ENCODE measurements at regions of chr22 and their contacts with region 1.

Region 1: GRCh38 chr22:45163451-45164269 is at the start of gene NUP50:
- DNase-seq: peak; percentile 96
- H3K4me3 Mint-ChIP-seq: peak within 1 kb of the TSS; percentile 98
- H3K27ac Mint-ChIP-seq: peak within 1 kb of the TSS; percentile 90
- H3K4me1 Mint-ChIP-seq: peaks cover 48% of the 10 kb centered on the region
- H3K27me3 Mint-ChIP-seq: no peaks in the 10 kb centered on the region
- total RNA-seq, gene NUP50: 156 and 164 TPM in 2 replicates

Region 2: DNA sequence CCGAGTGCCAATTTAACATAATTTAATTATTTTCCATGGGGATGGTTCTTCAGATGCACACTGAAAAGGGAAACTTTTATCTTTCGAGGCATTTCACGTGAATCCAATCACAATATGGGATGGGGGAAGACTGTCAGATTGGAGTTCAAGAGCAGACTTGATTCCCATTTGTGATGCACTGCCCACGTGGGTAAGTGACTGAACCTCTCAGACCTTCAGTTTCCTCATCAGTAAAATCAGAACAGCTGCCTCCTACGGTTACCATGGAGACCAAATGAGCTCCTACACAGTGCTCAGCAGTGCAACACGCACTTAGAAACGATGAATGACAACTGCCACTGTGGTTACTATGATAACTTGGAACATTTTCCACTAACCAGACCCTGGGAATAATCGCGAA is 55.3 kb after region 1 on chr22:
- intact Hi-C with region 1: loop called (anchors 2 kb)
- DNase-seq: no peak
- H3K4me3 Mint-ChIP-seq: no peak overlapping the region
- H3K27ac Mint-ChIP-seq: peak overlapping the region; percentile 79
- H3K4me1 Mint-ChIP-seq: peaks cover 13% of the 10 kb centered on the region
- H3K27me3 Mint-ChIP-seq: no peaks in the 10 kb centered on the region

Region 3: GRCh38 chr22:45240810-45241631 is 77.4 kb after region 1 on chr22 and contains the start of gene KIAA0930:
- intact Hi-C with region 1: loop called (anchors 2 kb)
- DNase-seq: peak; percentile 68
- H3K4me3 Mint-ChIP-seq: peak within 1 kb of the TSS; percentile 93
- H3K27ac Mint-ChIP-seq: peak within 1 kb of the TSS; percentile 89
- H3K4me1 Mint-ChIP-seq: peaks cover 8% of the 10 kb centered on the region
- H3K27me3 Mint-ChIP-seq: no peaks in the 10 kb centered on the region
- total RNA-seq, gene KIAA0930: 45.5 and 48.7 TPM in 2 replicates

Region 4: DNA sequence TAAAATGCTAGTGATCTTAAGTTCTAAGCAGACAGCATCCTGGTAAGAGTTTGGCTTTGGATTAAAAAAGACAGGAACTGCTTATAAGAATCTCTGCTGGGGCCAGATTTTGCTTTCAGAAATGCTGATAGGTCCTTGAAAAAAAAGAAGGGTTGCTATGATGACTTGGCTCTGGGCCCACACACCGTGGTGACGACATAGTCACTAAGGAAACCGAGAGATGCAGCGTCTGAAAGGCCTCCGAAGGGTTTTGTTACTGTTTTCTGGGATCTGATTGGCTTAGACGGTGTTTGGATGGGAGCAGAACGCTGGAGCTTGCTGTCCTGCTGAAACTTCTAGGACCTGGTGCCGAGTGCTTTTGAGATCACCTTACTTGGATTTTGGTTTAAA is 154.5 kb after region 1 on chr22:
- intact Hi-C with region 1: loop called (anchors 2 kb)
- DNase-seq: peak; percentile 83
- H3K4me3 Mint-ChIP-seq: peak overlapping the region; percentile 79
- H3K27ac Mint-ChIP-seq: peak overlapping the region; percentile 97
- H3K4me1 Mint-ChIP-seq: peaks cover 69% of the 10 kb centered on the region
- H3K27me3 Mint-ChIP-seq: no peaks in the 10 kb centered on the region

Region 5: DNA sequence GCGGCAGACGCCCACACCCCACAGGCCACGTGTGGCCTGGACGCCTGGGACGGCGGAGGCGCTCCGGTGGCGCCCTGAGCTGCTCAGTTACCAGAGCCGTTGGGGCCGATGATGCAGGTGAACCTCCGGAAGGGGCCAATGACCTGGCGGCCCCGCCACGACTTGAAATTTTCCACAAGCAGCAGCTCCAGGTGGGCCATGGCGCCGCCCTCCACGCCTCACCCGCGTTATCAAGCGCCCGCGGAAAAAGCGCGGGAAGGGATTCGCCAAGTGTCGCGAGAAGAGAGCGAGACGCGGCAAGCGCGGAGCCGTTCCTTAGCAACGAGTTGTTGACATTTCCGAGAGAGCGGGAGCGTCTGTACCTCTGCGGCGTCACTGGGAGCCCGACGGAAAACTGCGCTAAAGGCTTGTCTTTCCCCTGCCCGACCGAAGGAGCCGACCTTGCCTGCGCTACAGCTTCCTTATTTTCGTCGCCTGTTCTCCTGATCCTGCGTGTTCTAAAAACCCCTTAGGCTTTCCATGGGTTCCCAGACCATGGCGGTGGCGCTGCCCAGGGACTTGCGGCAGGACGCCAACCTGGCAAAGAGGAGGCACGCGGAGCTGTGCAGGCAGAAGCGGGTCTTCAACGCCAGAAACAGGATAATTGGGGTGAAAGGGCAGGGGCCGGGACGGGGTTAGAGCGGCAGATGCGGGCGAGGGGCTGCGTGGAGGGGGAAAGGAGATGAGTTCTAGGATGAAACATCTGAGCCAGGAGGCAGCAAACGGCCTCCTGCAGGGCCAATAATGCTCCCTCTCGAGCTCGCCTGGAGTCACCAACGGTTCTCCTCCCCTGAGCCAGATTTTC is 249.9 kb after region 1 on chr22 and contains the starts of genes RIBC2 and SMC1B:
- intact Hi-C with region 1: loop called (anchors 10 kb)
- DNase-seq: peak; percentile 85
- H3K4me3 Mint-ChIP-seq: peak within 1 kb of the TSS; percentile 88
- H3K27ac Mint-ChIP-seq: peak within 1 kb of the TSS; percentile 94
- H3K4me1 Mint-ChIP-seq: peaks cover 13% of the 10 kb centered on the region
- H3K27me3 Mint-ChIP-seq: no peaks in the 10 kb centered on the region
- total RNA-seq, gene RIBC2: 10.6 and 12.6 TPM in 2 replicates
- total RNA-seq, gene SMC1B: 0.44 and 0.83 TPM in 2 replicates

Measured in activated T-helper 1 cell treated with anti-CD3 and anti-CD28 coated beads, Interleukin-12 subunit alpha, Interleukin-12 subunit beta, Interleukin-2, Interleukin-4 antibody, amounts not matched to agents 30 ng/mL and 10 ng/mL and 1 ng/mL, durations not matched to agents 14 hours and 24 hours and 36 hours (primary cell).